H1 (cell line): ENCODE measurements at regions of chr1 and their contacts with region 1.

Region 1: DNA sequence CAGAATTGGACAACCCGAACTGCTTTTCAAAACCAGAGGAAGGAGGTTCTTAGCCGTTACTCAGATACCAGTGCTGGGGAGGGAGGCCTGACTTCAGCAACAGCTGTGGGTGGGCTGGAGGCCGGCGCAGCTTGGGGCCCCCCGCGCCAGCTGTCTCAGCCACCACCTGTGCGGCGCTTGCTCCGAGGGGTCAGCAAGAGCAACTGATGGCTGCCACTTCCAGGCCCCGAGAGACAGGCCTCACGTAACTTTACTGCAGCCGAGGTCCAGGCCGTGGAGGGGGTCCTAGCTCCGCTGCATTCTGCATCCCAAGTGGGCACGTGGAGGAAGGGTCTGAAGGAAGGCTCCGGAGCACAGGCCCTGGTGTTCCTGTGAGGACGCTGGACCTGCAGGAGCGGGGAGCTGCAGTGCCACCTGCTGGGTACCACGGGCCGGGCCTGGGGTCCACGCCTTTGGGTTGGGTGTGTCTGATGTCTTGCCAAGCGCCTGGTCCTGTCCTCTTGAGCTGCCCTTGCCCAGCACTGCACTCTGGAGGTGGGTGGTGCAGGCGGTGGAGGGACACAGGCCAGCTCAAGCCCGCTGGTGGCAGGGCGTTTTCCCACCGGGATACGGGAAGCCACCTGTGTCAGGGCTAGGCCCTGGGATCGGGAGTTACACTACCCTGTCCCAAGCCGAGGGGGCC is 9.8 kb downstream of the THAP3 start:
- DNase-seq: peak in 1 of 2 experiments; percentile 79
- H3K4me3 ChIP-seq: no peak overlapping the region
- H3K27ac ChIP-seq: no peak overlapping the region
- H3K4me1 ChIP-seq: no peaks in the 10 kb centered on the region
- H3K27me3 ChIP-seq: no peaks in the 10 kb centered on the region
- CTCF ChIP-seq: peak; percentile 53 to 68 (median 58)
- EP300 ChIP-seq: no peak
- POLR2A ChIP-seq: no peak; a peak in 1 of 3 replicates
- RAD21 ChIP-seq: peak; percentile 53 to 64

Region 2: GRCh38 chr1:6588893-6589520 is 45.5 kb before region 1 on chr1:
- CTCF ChIA-PET with region 1: interaction called, 11 read pairs
- POLR2A ChIA-PET with region 1: interaction called, 4 read pairs
- DNase-seq: no peak
- H3K4me3 ChIP-seq: no peak overlapping the region
- H3K27ac ChIP-seq: no peak overlapping the region
- H3K4me1 ChIP-seq: no peaks in the 10 kb centered on the region
- H3K27me3 ChIP-seq: no peaks in the 10 kb centered on the region
- CTCF ChIP-seq: no peak
- EP300 ChIP-seq: no peak
- POLR2A ChIP-seq: no peak
- RAD21 ChIP-seq: no peak

Region 3: GRCh38 chr1:7110321-7110720 is 475.8 kb after region 1 on chr1:
- CTCF ChIA-PET with region 1: no interaction called
- POLR2A ChIA-PET with region 1: no interaction called
- DNase-seq: no peak
- H3K4me3 ChIP-seq: no peak overlapping the region
- H3K27ac ChIP-seq: no peak overlapping the region
- H3K4me1 ChIP-seq: peaks cover 0 to 4% (median 0%) of the 10 kb centered on the region in 4 experiments; a peak in 1 of 7 replicates
- H3K27me3 ChIP-seq: no peaks in the 10 kb centered on the region
- CTCF ChIP-seq: no peak
- EP300 ChIP-seq: no peak
- POLR2A ChIP-seq: no peak
- RAD21 ChIP-seq: no peak